Posterior vena cava (tissue), 2 donors: ENCODE measurements at regions of chr1 and their contacts with region 1.

Region 1: GRCh38 chr1:220776720-220777326 is 9.9 kb upstream of the MTARC1 start:
- DNase-seq: peak; percentile 95

Region 2: GRCh38 chr1:220521778-220522177 is 255.0 kb before region 1 on chr1:
- intact Hi-C with region 1: no loop called
- DNase-seq: no peak

Region 3: DNA sequence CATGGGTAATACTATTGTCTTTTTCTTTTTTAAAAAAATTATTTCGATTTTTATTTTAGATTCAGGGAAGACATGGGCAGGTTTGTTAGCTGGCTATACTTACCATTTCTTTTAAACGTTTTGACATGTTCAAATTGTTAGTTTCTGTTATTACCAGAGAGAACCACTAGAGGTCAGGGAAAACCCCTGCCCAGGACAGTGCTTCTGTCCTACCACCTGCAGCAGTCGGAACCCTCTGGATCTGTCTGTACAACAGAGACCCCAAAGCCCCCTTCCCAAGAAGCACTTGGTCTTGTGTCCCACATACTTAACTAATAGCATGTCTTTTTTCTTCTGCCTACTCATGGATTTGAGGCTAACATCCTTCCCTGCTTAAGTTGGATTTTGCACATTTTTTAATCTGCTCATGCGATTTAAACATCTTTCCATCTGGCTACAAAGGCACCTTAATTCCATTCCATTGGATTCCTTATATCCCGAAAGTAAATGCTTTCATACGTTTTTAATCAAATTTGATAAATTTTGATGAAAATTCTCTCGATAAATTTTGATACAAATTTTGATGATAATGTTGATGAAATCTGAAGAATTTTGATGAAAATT is 96.6 kb before region 1 on chr1:
- intact Hi-C with region 1: loop called in 1 of 2 experiments (anchors 10 kb)
- DNase-seq: no peak

Region 4: DNA sequence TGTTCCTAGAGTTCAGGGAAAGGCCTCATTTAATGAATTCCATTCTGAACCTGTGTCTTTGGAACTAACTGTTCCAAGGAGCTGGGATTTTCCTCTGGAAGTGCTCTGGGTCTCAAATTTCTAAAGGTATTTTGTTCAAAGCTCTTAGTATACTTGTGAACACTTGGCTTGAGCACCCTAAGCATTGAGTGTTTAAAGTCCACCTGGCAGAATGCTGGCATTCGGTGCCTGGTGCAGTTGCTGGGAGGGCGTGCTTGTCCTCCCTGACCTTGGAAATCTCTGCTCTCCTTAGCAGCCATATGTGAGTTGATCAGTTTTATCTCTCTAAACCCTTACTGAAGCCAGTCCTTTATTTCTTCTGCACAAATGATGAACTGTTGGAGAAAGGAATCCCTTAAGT is 25.7 kb before region 1 on chr1:
- intact Hi-C with region 1: loop called in 1 of 2 experiments (anchors 1 kb)
- DNase-seq: no peak

Region 5: DNA sequence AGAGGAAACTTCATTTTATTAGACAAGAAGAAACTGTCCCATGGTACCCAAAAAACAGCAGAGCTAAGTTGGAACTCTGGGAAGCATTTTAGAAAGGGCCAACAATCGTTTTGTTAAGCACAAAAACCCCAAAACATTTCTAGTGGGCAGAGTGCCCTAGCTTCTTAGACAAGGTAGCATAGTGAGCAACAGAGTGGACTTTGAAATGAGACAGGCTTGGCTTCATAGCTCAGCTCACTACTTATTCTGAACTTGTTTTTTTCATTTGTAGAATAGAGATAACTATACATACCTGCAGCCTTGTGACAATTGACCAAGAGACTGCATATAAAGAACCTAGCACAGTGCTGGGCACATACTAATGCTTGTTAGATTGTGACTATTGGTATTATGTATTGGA is 152.5 kb after region 1 on chr1:
- intact Hi-C with region 1: no loop called
- DNase-seq: no peak

Region 6: GRCh38 chr1:222713091-222713961 is 1936.5 kb after region 1 on chr1:
- intact Hi-C with region 1: no loop called
- DNase-seq: peak; percentile 98